ENCODE measurements at regions of chr17 and their contacts with region 1.

Region 1: DNA sequence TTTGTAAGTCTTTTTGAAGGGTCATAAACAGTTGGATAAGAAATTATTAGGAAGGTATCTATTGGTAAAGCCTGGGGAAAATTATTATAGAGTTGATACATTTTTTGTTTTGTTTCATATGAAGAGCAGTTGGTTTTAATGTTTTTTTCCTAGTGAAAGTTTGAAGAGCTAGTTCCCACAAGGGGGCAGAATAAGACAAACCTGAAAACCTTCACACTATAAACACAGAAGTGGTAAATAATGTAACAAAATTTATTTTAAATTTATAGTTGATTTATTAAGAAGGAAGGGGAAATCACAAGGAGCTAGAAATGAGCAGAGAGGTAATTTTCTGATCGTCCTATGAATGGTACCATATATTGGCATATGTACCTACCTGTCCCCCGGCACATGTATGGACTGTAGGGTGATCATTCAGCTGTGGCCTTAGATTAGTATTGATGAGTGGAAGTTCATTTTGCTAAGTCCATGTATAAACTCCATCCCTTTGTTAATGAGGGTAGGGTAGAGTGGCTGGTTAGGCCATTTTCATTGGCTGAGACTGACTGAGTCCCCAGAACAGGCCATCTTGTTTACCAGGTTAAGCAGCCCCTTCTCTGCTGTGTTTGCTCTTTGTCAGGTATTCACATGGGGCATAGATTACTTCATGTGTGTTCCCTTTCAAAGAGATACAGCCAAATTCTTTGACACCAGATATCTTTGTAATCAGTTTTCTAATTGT is 116.4 kb downstream of the TANC2 start:
- DNase-seq: peak; percentile 58
- H3K4me3 ChIP-seq: no peak overlapping the region
- H3K27ac ChIP-seq: no peak overlapping the region
- H3K4me1 ChIP-seq: no peaks in the 10 kb centered on the region
- H3K27me3 ChIP-seq: no peaks in the 10 kb centered on the region
- CTCF ChIP-seq: peak; percentile 9 to 30
- POLR2A ChIP-seq: no peak

Region 2: GRCh38 chr17:62703775-62704378 is 378.6 kb before region 1 on chr17:
- CTCF ChIA-PET with region 1: interaction called, 4 read pairs
- POLR2A ChIA-PET with region 1: no interaction called
- dilution Hi-C with region 1: no loop called
- intact Hi-C with region 1: loop called (anchors 1 kb)
- DNase-seq: peak; percentile 44
- H3K4me3 ChIP-seq: peak overlapping the region; percentile 23 to 56 (median 48)
- H3K27ac ChIP-seq: peak overlapping the region; percentile 14
- H3K4me1 ChIP-seq: peaks cover 32% of the 10 kb centered on the region
- H3K27me3 ChIP-seq: peaks cover 0 to 8% of the 10 kb centered on the region in 2 experiments
- CTCF ChIP-seq: peak; percentile 79 to 87
- POLR2A ChIP-seq: no peak

Region 3: DNA sequence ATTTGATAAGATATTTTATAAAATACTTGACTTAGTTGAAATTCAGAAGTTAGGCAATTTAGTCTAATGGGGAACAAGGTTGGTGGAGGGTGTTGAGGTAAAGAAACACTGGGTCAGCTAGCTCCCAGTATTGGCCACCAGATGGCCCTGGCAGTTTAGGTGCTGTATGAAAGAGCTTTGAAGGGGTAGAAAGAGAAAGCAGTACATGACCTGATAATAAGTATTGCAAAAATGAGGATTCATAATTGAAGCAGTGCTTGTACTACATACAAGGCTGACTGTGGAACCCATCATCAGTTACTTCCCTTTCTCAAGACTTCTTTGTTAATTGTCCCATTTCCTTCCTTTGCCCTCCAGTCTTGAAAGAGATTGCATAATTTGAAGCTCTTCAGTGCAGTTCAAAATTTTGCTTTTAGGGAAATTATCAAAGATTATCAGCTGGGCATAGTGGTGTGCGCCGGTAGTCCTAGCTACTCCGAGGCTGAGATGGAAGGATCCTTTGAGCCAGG is 87.0 kb before region 1 on chr17:
- CTCF ChIA-PET with region 1: interaction called, 31 read pairs
- POLR2A ChIA-PET with region 1: no interaction called
- dilution Hi-C with region 1: no loop called
- intact Hi-C with region 1: no loop called
- DNase-seq: peak; percentile 45
- H3K4me3 ChIP-seq: no peak overlapping the region
- H3K27ac ChIP-seq: no peak overlapping the region
- H3K4me1 ChIP-seq: peaks cover 2% of the 10 kb centered on the region
- H3K27me3 ChIP-seq: no peaks in the 10 kb centered on the region
- CTCF ChIP-seq: peak; percentile 46 to 57
- POLR2A ChIP-seq: no peak

Region 4: GRCh38 chr17:63095443-63095842 is 13.0 kb after region 1 on chr17:
- CTCF ChIA-PET with region 1: interaction called, 18 read pairs
- POLR2A ChIA-PET with region 1: no interaction called
- dilution Hi-C with region 1: no loop called
- intact Hi-C with region 1: no loop called
- DNase-seq: no peak
- H3K4me3 ChIP-seq: no peak overlapping the region
- H3K27ac ChIP-seq: no peak overlapping the region
- H3K4me1 ChIP-seq: no peaks in the 10 kb centered on the region
- H3K27me3 ChIP-seq: no peaks in the 10 kb centered on the region
- CTCF ChIP-seq: no peak
- POLR2A ChIP-seq: no peak

Region 5: GRCh38 chr17:63102034-63102433 is 19.6 kb after region 1 on chr17:
- CTCF ChIA-PET with region 1: interaction called, 15 read pairs
- POLR2A ChIA-PET with region 1: no interaction called
- dilution Hi-C with region 1: no loop called
- intact Hi-C with region 1: no loop called
- DNase-seq: no peak
- H3K4me3 ChIP-seq: no peak overlapping the region
- H3K27ac ChIP-seq: no peak overlapping the region
- H3K4me1 ChIP-seq: peaks cover 6% of the 10 kb centered on the region
- H3K27me3 ChIP-seq: no peaks in the 10 kb centered on the region
- CTCF ChIP-seq: no peak
- POLR2A ChIP-seq: no peak

Measured in endothelial cell of umbilical vein (primary cell).